MCF 10A (cell line): ENCODE measurements at regions of chr7 and their contacts with region 1.

Region 1: GRCh38 chr7:95916573-95917297 is 144.4 kb downstream of the DYNC1I1 start:
- DNase-seq: peak; percentile 77
- H3K4me3 Mint-ChIP-seq: peak overlapping the region; percentile 24
- H3K27ac Mint-ChIP-seq: no peak overlapping the region
- H3K4me1 Mint-ChIP-seq: no peaks in the 10 kb centered on the region
- H3K27me3 Mint-ChIP-seq: peaks cover 83% of the 10 kb centered on the region
- CTCF ChIP-seq: peak; percentile 75

Region 2: DNA sequence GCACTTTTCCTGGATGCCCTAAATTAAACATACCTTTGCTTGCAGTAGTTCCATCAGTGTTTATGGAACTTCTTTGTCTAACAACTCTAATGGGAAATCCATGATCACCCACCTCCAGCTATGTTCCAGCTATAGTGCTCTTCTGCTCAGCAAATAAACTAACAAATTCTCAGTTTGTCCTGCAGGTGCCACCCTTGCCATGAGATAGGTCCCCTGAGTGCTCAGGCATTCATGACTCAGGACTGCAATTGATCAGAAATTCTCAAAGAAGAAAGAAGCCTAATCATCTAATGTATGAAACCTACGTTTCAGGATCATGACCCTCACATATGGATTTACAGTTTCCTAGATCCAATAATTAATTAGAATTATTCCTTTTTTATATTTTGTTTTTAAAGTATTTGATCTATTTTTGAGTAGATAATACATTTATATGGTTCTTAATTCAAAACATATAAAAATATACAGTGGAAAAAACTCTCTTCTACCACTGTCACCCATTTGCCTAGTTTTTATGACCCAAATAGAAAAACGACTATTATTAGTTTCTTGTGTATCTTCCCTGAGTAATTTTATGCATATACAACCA is 193.0 kb before region 1 on chr7:
- CTCF ChIA-PET with region 1: interaction called, 7 read pairs
- POLR2A ChIA-PET with region 1: no interaction called
- intact Hi-C with region 1: loop called (anchors 2 kb)
- DNase-seq: peak; percentile 67
- H3K4me3 Mint-ChIP-seq: no peak overlapping the region
- H3K27ac Mint-ChIP-seq: no peak overlapping the region
- H3K4me1 Mint-ChIP-seq: no peaks in the 10 kb centered on the region
- H3K27me3 Mint-ChIP-seq: peaks cover 86% of the 10 kb centered on the region
- CTCF ChIP-seq: peak; percentile 68

Region 3: DNA sequence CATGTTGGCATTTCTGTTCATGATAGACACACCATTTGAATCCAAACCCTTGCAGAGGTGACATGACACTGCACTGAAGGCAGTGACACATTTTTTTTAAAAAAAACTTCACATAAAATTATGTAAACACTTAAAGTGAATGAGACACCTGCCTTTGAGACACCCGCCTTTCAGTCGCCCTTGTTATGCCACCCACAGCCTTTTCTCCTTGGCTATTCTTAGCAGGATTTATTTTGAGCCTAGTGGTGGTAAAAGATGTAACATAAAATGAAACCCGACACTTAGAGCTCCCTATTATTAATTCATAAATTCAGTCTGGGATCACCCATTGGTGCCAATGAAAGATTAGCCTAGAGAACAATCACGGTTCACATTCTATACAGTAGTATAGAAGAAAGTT is 16.9 kb after region 1 on chr7:
- CTCF ChIA-PET with region 1: interaction called, 17 read pairs
- POLR2A ChIA-PET with region 1: no interaction called
- intact Hi-C with region 1: no loop called
- DNase-seq: no peak
- H3K4me3 Mint-ChIP-seq: no peak overlapping the region
- H3K27ac Mint-ChIP-seq: no peak overlapping the region
- H3K4me1 Mint-ChIP-seq: no peaks in the 10 kb centered on the region
- H3K27me3 Mint-ChIP-seq: peaks cover 63% of the 10 kb centered on the region
- CTCF ChIP-seq: no peak

Region 4: GRCh38 chr7:97064967-97065587 is 1148.3 kb after region 1 on chr7:
- CTCF ChIA-PET with region 1: interaction called, 49 read pairs
- POLR2A ChIA-PET with region 1: no interaction called
- intact Hi-C with region 1: loop called (anchors 1 kb)
- DNase-seq: peak; percentile 67
- H3K4me3 Mint-ChIP-seq: no peak overlapping the region
- H3K27ac Mint-ChIP-seq: no peak overlapping the region
- H3K4me1 Mint-ChIP-seq: no peaks in the 10 kb centered on the region
- H3K27me3 Mint-ChIP-seq: peaks cover 50% of the 10 kb centered on the region
- CTCF ChIP-seq: peak; percentile 70

Region 5: DNA sequence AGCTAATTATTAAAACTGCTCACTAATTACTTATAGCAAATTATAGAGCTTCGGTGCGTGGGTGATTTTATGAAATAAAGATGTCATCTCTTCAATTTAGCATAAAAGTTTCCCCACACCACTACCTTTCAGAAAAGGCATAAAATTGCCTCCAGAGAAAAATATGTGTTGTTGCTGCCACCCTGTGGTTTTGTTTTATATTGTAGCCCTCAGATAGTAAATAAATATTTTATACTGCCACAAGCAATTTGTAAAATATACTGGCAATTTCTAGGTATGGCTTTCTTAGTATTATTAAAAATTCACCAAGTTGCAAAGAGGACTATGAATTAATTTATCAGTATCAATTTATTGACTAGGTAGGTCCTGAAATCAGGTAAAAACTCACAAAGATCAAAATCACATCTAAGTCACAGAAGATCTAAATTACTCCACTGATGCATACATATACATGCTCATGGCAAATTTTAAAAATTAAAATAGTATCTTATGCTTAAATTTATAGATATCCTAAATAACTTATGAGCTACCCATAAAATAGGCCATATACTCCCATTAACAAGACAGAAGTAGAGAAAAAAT is 1929.0 kb after region 1 on chr7:
- CTCF ChIA-PET with region 1: interaction called, 6 read pairs
- POLR2A ChIA-PET with region 1: no interaction called
- intact Hi-C with region 1: loop called (anchors 2 kb)
- DNase-seq: peak; percentile 43
- H3K4me3 Mint-ChIP-seq: no peak overlapping the region
- H3K27ac Mint-ChIP-seq: no peak overlapping the region
- H3K4me1 Mint-ChIP-seq: no peaks in the 10 kb centered on the region
- H3K27me3 Mint-ChIP-seq: peaks cover 16% of the 10 kb centered on the region
- CTCF ChIP-seq: peak; percentile 24